Heart left ventricle (tissue), 16 donors: ENCODE measurements at regions of chr17 and their contacts with region 1.

Region 1: DNA sequence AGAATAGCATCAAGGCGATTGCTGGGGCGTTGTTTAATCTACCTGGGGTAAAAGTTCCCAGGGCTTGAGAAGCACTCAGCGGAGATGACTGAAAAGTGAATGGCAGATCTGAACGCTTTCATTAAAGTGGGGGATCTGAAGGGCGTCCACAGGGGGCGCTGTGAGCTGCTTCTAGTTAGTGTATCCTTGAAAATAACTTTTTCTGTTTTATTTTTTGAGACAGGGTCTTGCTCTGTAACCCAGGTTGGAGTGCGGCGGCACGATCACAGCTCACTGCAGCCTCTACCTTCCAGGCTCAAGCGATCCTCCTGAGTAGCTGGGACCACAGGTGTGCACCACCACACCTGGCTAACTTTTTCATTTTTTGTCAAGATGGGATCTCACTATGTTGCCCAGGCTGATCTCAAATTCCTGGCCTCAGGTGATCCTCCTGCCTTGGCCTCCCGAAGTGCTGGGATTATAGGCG is 360.4 kb downstream of the SEC14L1 start:
- DNase-seq: peak in 2 of 5 donors; percentile 22
- ATAC-seq: no peak
- H3K4me3 ChIP-seq: no peak overlapping the region
- H3K27ac ChIP-seq: no peak overlapping the region
- H3K4me1 ChIP-seq: no peaks in the 10 kb centered on the region
- H3K27me3 ChIP-seq: no peaks in the 10 kb centered on the region
- CTCF ChIP-seq: peak in 9 of 12 donors; percentile 16 to 53 (median 27)
- POLR2A ChIP-seq: no peak

Region 2: GRCh38 chr17:77076124-77076872 is 424.8 kb before region 1 on chr17:
- intact Hi-C with region 1: loop called in 2 of 10 experiments (anchors 10 kb)
- DNase-seq: no peak
- ATAC-seq: peak in 2 of 4 donors; percentile 48 to 55
- H3K4me3 ChIP-seq: no peak overlapping the region
- H3K27ac ChIP-seq: no peak overlapping the region
- H3K4me1 ChIP-seq: peaks cover 0 to 5% (median 0%) of the 10 kb centered on the region in 12 donors
- H3K27me3 ChIP-seq: peaks cover 0 to 55% (median 6%) of the 10 kb centered on the region in 9 donors
- CTCF ChIP-seq: no peak
- POLR2A ChIP-seq: no peak